Aorta (tissue), 5 donors: ENCODE measurements at regions of chr7 and their contacts with region 1.

Region 1: DNA sequence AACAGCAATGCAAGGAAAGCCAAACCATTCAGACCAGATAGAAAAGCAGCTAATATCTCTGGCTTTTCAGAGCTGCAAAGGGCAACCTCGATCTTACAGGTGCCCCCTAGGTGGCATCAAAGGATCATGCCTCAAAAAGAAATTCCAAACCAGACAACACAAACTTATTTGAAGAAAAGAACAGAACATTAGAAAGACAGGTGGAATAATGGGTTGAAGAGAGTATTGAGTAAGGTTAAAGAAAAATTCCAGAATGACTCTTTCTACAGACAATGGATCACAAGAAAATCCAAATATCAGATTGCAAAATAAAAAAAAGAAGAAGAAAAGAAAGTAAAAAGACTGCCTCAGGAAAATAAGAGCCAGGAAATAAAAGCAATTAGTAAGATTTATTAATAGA is 213.7 kb downstream of the ELMO1 start:
- DNase-seq: no peak
- ATAC-seq: no peak
- H3K4me3 ChIP-seq: no peak overlapping the region
- H3K27ac ChIP-seq: no peak overlapping the region
- H3K4me1 ChIP-seq: no peaks in the 10 kb centered on the region
- H3K27me3 ChIP-seq: peaks cover 0 to 2% of the 10 kb centered on the region in 2 donors

Region 2: DNA sequence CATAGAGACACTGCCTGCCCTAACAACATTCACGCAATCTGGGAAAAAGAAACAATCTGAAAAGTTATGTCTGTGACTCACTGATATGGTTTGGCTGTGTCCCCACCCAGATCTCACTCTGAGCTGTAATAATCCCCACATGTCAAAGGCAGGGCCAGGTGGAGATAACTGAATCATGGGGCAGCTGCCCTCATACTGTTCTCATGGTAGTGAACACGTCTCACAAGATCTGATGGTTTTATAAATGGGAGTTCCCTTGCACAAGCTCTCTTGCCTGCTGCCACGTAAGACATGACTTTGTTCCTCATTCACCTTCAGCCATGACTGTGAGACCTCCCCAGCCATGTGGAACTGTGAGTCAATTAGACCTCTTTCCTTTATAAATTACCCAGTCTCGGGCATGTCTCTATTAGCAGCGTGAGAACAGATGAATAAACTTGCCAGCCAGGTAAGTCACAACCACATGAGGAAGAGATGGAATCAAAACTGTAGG is 169.1 kb before region 1 on chr7:
- intact Hi-C with region 1: no loop called
- DNase-seq: no peak
- ATAC-seq: no peak
- H3K4me3 ChIP-seq: no peak overlapping the region
- H3K27ac ChIP-seq: no peak overlapping the region
- H3K4me1 ChIP-seq: no peaks in the 10 kb centered on the region
- H3K27me3 ChIP-seq: no peaks in the 10 kb centered on the region

Region 3: DNA sequence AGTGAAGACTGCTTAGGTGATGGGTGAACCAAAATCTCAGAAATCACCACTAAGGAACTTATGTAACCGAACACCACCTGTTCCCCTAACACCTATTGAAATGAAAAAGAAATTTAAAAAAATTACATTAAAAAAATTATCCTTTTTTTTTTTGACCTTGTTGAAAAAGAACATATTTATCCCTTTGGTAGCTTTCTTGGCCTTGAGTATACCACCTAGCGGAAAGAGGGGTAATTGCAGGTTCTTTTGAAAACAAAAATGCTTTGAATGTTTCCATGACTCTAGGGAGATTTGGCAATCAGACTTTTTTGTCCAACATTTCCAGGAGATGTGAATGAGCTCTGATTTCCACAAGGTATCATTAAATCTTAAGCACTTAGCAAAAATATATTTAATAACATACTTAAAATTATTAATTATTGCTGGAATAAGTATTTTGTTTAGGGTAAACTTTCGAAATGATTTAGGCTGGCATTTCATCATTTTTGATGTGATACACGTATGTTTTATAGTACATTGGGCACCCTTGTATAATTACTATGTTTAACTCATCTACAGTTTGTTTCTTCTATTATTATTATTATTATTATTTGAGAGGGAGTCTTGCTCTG is 260.8 kb after region 1 on chr7:
- intact Hi-C with region 1: loop called (anchors 5 to 10 kb)
- DNase-seq: no peak
- ATAC-seq: peak; percentile 84
- H3K4me3 ChIP-seq: no peak overlapping the region
- H3K27ac ChIP-seq: no peak overlapping the region
- H3K4me1 ChIP-seq: no peaks in the 10 kb centered on the region
- H3K27me3 ChIP-seq: no peaks in the 10 kb centered on the region

Region 4: GRCh38 chr7:37666026-37666780 is 431.3 kb after region 1 on chr7:
- intact Hi-C with region 1: no loop called
- DNase-seq: no peak
- ATAC-seq: no peak
- H3K4me3 ChIP-seq: no peak overlapping the region
- H3K27ac ChIP-seq: no peak overlapping the region
- H3K4me1 ChIP-seq: no peaks in the 10 kb centered on the region
- H3K27me3 ChIP-seq: no peaks in the 10 kb centered on the region